ENCODE measurements at regions of chr17 and their contacts with region 1.

Region 1: DNA sequence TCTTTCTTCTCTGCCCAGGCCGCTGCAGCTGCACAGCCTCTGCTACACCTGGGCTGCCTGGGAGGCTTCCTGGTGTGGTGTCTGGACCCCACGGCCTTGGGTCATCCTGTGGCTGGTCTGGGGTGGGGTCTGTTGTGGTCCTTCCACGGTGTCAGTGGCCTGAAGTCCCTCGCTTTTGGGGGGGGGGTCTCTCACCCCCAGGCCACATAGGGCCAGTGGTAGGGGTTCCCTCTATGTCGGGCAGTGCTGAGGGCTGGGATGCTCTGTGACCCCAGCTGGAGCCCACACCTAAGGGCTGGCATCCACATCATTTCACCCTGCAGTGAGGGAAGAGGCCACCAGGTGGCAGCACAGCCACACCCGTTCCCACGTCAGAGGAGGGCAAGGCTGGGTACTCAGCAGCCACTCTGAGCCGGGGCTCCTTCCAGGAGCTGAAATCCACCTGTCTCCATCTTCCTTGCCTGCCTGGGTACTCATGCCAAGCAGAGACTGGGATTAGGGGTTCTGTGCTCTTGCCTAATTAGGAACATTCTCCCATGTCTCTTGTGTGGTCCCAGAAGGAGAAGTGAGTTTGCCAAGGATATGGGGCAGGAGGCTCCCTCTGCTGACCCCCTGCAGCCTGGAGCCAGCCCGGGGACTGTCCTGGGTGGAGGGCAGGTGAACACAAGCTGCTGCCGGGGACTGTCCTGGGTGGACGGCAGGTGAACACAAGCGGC is 13.0 kb downstream of the ENGASE start:
- DNase-seq: peak; percentile 68 to 96
- ATAC-seq: peak; percentile 70 to 90
- H3K4me3 ChIP-seq: no peak overlapping the region
- H3K27ac ChIP-seq: no peak overlapping the region
- H3K4me1 ChIP-seq: no peaks in the 10 kb centered on the region
- CTCF ChIP-seq: peak; percentile 95
- EP300 ChIP-seq: no peak
- POLR2A ChIP-seq: no peak
- RAD21 ChIP-seq: peak; percentile 88 to 89

Region 2: GRCh38 chr17:79019632-79020584 is 67.7 kb before region 1 on chr17:
- CTCF ChIA-PET with region 1: interaction called, 200 read pairs
- POLR2A ChIA-PET with region 1: no interaction called
- DNase-seq: peak; percentile 71 to 82
- ATAC-seq: peak; percentile 48 to 62; a peak in 3 of 6 replicates
- H3K4me3 ChIP-seq: no peak overlapping the region
- H3K27ac ChIP-seq: peak overlapping the region; percentile 32 to 43; a peak in 4 of 6 replicates
- H3K4me1 ChIP-seq: peaks cover 15% of the 10 kb centered on the region
- CTCF ChIP-seq: peak; percentile 98
- EP300 ChIP-seq: no peak; a peak in 1 of 5 replicates
- POLR2A ChIP-seq: no peak
- RAD21 ChIP-seq: peak; percentile 91 to 96

Region 3: GRCh38 chr17:79045842-79046196 is 41.8 kb before region 1 on chr17:
- CTCF ChIA-PET with region 1: interaction called, 289 read pairs
- POLR2A ChIA-PET with region 1: no interaction called
- DNase-seq: peak; percentile 78 to 89
- ATAC-seq: peak; percentile 73 to 88
- H3K4me3 ChIP-seq: no peak overlapping the region
- H3K27ac ChIP-seq: no peak overlapping the region
- H3K4me1 ChIP-seq: peaks cover 6% of the 10 kb centered on the region; the same call in 2 of the 3 replicates
- CTCF ChIP-seq: peak; percentile 92
- EP300 ChIP-seq: no peak
- POLR2A ChIP-seq: no peak
- RAD21 ChIP-seq: peak; percentile 83

Region 4: DNA sequence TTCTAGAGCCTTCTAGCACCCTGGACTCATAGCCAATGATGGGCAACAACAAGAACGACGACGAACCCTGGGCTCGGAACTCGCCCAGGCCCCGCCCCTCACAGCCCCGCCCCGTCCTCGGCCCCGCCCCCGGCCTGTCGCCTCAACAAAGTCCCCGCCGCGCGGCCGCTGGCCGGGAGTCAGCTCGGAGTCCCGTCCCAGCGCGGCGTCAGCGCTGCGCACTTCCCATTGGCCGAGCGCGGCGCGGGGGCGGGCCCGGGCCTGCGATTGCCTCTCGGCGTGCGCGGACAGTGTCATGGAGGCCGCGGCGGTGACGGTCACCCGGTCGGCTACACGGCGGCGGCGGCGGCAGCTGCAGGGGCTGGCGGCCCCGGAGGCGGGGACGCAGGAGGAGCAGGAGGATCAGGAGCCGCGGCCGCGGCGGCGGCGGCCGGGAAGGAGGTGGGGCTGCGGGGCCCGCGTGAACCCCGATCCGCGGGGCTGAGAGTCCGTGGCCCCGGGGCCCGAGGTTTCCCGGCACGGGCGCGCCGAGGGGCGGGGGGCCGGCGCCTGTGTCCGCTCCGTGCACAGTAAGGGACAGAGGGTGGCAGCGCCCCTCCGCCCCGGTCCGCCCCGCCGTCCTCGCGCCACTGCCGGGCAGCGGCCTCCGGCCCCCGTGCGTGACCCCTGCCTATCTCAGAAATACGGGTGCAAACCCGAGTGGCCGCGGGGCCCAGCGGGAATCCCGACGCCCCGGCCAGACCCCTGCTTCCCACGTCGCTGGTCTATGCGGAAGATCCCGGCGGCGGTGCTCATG is 12.7 kb before region 1 on chr17 and contains the start of gene ENGASE:
- CTCF ChIA-PET with region 1: interaction called, 147 read pairs
- POLR2A ChIA-PET with region 1: interaction called, 4 read pairs
- DNase-seq: peak; percentile 95 to 98
- ATAC-seq: peak; percentile 96 to 98
- H3K4me3 ChIP-seq: peak within 1 kb of the TSS; percentile 79
- H3K27ac ChIP-seq: peak within 1 kb of the TSS; percentile 81 to 91
- H3K4me1 ChIP-seq: peaks cover 12% of the 10 kb centered on the region; the same call in 2 of the 3 replicates
- CTCF ChIP-seq: no peak
- EP300 ChIP-seq: no peak
- POLR2A ChIP-seq: peak; percentile 94
- RAD21 ChIP-seq: no peak
- polyA plus RNA-seq, gene ENGASE: 11.5 and 13.4 TPM in 2 replicates

Region 5: DNA sequence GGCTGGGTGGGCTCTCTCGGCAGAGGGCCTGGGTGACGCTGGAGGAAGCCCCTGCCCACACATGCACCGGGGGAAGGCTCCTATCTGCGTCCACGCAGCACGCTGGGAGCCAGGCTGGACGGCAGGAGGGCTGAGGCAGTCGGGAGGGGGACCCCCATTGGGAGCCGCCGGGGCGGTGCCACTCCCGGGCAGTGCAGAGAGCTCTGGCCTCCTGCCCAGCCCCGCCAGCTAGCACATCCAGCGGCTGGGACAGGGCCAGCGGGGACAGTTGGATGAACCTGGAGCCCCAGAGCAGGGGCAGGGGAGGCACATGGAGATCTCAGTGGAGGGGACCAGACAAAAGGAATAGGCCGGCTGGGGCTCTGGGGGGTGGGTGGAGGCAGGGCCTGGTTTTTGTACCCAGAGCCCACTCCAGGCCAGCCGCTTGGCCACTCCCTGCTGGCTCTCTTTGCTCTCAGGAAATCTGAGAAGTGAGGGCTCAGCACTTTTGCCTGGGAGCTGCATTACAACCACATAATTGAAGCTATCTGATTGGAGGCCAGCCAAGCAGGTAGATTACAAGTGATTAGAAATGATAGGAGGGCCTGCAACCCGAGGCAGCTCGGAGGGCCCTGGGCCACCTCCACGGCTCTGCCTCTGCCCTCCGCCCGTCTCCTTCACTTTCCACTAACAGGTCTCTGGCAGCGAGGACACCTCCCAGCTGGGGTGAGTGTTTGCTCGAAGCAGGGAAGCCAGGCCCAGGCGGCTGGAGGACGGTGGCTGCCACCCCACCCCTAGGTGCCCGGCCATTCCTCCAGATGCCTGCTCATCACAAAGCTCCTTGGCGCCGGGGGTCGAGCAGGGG is 27.1 kb after region 1 on chr17:
- CTCF ChIA-PET with region 1: interaction called, 52 read pairs
- POLR2A ChIA-PET with region 1: no interaction called
- DNase-seq: no peak
- ATAC-seq: no peak
- H3K4me3 ChIP-seq: no peak overlapping the region
- H3K27ac ChIP-seq: no peak overlapping the region
- H3K4me1 ChIP-seq: no peaks in the 10 kb centered on the region
- CTCF ChIP-seq: no peak
- EP300 ChIP-seq: no peak
- POLR2A ChIP-seq: no peak
- RAD21 ChIP-seq: no peak

Region 6: DNA sequence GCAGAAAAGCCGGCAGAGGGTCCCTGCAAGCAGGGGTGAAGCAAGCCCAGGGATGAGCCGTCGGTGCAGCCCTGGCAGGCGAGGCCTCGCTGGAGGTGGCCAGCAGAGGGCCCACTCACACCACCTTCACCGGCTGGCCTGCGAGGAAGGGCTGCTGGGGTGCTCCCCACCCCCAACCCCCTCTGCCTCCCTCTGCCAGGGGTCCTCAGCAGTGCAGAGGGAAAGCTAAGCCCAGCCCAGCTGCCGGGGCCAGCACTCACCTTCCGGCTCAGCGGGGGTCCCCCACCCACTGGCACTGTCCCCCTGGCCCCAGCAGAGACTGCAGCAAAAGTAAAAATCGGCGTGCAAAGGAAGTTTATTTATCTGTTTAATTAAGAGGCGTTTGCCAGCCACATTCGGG is 100.5 kb after region 1 on chr17:
- CTCF ChIA-PET with region 1: interaction called, 19 read pairs
- POLR2A ChIA-PET with region 1: no interaction called
- DNase-seq: peak; percentile 50 to 88
- ATAC-seq: peak; percentile 57 to 79; a peak in 4 of 6 replicates
- H3K4me3 ChIP-seq: no peak overlapping the region
- H3K27ac ChIP-seq: no peak overlapping the region
- H3K4me1 ChIP-seq: no peaks in the 10 kb centered on the region; the same call in 2 of the 3 replicates
- CTCF ChIP-seq: peak; percentile 88
- EP300 ChIP-seq: no peak
- POLR2A ChIP-seq: no peak
- RAD21 ChIP-seq: peak; percentile 82 to 94

Region 7: GRCh38 chr17:79707931-79708891 is 620.6 kb after region 1 on chr17:
- CTCF ChIA-PET with region 1: interaction called, 51 read pairs
- POLR2A ChIA-PET with region 1: no interaction called
- DNase-seq: peak; percentile 66 to 71
- ATAC-seq: peak; percentile 58 to 80
- H3K4me3 ChIP-seq: no peak overlapping the region
- H3K27ac ChIP-seq: peak overlapping the region; percentile 63 to 77; a peak in 5 of 6 replicates
- H3K4me1 ChIP-seq: peaks cover 17% of the 10 kb centered on the region
- CTCF ChIP-seq: peak; percentile 96
- EP300 ChIP-seq: no peak
- POLR2A ChIP-seq: no peak
- RAD21 ChIP-seq: peak; percentile 96 to 97